ENCODE measurements at regions of chr5 and their contacts with region 1.

Region 1: GRCh38 chr5:154829589-154830218 is 20.7 kb downstream of the FAXDC2 start:
- DNase-seq: peak; percentile 98
- H3K4me3 Mint-ChIP-seq: peak overlapping the region; percentile 14
- H3K27ac Mint-ChIP-seq: peak overlapping the region; percentile 87
- H3K4me1 Mint-ChIP-seq: peaks cover 54% of the 10 kb centered on the region
- H3K27me3 Mint-ChIP-seq: no peaks in the 10 kb centered on the region
- CTCF ChIP-seq: no peak

Region 2: DNA sequence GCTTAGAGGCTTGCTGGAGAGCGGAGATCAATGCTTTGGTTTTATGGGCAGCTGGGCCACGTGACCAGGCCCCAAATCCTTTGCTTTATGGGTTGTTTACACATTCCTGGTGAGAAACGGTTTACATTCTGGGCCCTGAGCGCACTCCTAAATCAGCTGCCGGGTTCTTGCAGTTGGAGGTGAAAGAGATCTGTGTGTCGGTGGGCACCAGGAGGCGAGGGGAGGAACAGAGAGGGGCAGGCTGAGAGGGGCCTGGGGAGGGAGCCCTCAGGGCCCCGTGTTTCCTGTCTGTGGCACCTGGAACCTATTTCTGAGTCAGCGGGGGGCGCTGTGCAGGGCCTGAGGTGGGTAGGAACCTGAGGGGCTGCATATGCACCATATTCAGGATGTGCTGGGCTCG is 288.2 kb before region 1 on chr5:
- CTCF ChIA-PET with region 1: no interaction called
- POLR2A ChIA-PET with region 1: no interaction called
- intact Hi-C with region 1: no loop called
- DNase-seq: no peak
- H3K4me3 Mint-ChIP-seq: no peak overlapping the region
- H3K27ac Mint-ChIP-seq: no peak overlapping the region
- H3K4me1 Mint-ChIP-seq: peaks cover 15% of the 10 kb centered on the region
- H3K27me3 Mint-ChIP-seq: peaks cover 73% of the 10 kb centered on the region
- CTCF ChIP-seq: no peak

Region 3: GRCh38 chr5:154557548-154557947 is 272.2 kb before region 1 on chr5:
- CTCF ChIA-PET with region 1: no interaction called
- POLR2A ChIA-PET with region 1: no interaction called
- intact Hi-C with region 1: no loop called
- DNase-seq: no peak
- H3K4me3 Mint-ChIP-seq: no peak overlapping the region
- H3K27ac Mint-ChIP-seq: no peak overlapping the region
- H3K4me1 Mint-ChIP-seq: no peaks in the 10 kb centered on the region
- H3K27me3 Mint-ChIP-seq: peaks cover 13% of the 10 kb centered on the region
- CTCF ChIP-seq: no peak

Region 4: DNA sequence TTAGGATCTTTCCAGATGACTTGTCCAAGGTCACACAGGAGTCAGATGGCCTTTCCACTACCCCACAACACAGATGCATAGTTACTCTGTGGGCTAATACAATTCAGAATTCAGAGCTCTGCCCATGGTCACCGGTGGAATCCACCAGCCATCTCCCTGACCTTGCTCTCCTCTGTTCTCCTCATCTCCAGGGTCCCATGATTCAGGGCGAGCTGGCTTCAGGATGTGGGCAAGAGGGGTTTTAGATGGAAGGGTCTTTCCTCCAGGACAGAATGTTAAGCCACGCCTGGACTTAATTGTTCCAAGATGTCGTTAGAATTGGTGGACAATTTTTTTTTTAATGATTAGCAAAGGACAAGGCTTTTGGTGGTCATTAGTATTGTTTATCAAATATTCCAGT is 156.2 kb before region 1 on chr5:
- CTCF ChIA-PET with region 1: no interaction called
- POLR2A ChIA-PET with region 1: no interaction called
- intact Hi-C with region 1: no loop called
- DNase-seq: no peak
- H3K4me3 Mint-ChIP-seq: no peak overlapping the region
- H3K27ac Mint-ChIP-seq: no peak overlapping the region
- H3K4me1 Mint-ChIP-seq: no peaks in the 10 kb centered on the region
- H3K27me3 Mint-ChIP-seq: no peaks in the 10 kb centered on the region
- CTCF ChIP-seq: no peak

Region 5: GRCh38 chr5:154818471-154819116 is 11.1 kb before region 1 on chr5:
- CTCF ChIA-PET with region 1: interaction called, 5 read pairs
- POLR2A ChIA-PET with region 1: interaction called, 13 read pairs
- intact Hi-C with region 1: no loop called
- DNase-seq: no peak
- H3K4me3 Mint-ChIP-seq: no peak overlapping the region
- H3K27ac Mint-ChIP-seq: peak overlapping the region; percentile 34
- H3K4me1 Mint-ChIP-seq: peaks cover 11% of the 10 kb centered on the region
- H3K27me3 Mint-ChIP-seq: no peaks in the 10 kb centered on the region
- CTCF ChIP-seq: no peak

Region 6: GRCh38 chr5:154850255-154851062 is 20.8 kb after region 1 on chr5 and contains the start of gene FAXDC2:
- CTCF ChIA-PET with region 1: interaction called, 3 read pairs
- POLR2A ChIA-PET with region 1: interaction called, 37 read pairs
- intact Hi-C with region 1: no loop called
- DNase-seq: peak; percentile 77
- H3K4me3 Mint-ChIP-seq: peak within 1 kb of the TSS; percentile 80
- H3K27ac Mint-ChIP-seq: peak within 1 kb of the TSS; percentile 80
- H3K4me1 Mint-ChIP-seq: peaks cover 13% of the 10 kb centered on the region
- H3K27me3 Mint-ChIP-seq: no peaks in the 10 kb centered on the region
- CTCF ChIP-seq: no peak
- total RNA-seq, gene FAXDC2: 0.79 and 2.1 TPM in 2 replicates

Region 7: DNA sequence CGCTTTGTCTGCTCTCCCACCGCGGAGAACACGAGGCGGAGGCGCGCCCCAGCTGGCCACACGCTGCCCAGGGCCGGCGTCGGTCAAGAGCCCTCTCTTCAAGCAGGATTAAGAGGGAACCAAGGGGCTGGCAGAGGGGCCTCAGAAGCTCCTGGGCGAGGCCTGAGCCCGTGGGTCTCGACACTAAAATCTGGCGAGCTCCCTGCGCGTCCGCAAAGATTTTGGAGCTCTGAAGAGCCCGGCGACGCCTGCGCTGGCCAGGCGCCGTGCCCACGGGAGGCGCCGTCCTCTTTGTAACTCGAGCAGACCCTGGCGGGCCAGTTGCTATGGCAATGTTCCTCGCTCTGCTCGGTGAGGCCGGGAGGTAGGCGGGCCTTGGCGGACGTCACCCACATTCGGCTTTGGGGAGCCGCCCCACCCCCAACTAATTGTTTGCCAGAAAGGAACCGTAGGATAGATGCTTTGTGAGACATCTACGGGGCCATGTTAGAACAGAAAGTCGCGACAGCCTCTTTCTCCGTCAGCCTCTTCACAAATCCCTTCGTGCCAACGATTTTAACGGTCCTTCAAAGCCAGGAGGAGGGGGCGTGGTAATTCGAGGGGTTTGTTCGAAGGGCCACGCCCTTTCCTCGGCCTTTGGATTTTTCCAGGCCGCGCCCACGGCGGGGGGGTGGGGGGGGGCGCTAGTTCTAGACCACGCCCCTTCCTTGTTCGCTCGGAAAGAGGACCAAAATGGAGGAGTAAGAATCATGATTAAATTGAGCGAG is 28.0 kb after region 1 on chr5:
- CTCF ChIA-PET with region 1: interaction called, 5 read pairs
- POLR2A ChIA-PET with region 1: interaction called, 78 read pairs
- intact Hi-C with region 1: loop called (anchors 2 kb)
- DNase-seq: peak; percentile 99
- H3K4me3 Mint-ChIP-seq: peak overlapping the region; percentile 85
- H3K27ac Mint-ChIP-seq: peak overlapping the region; percentile 95
- H3K4me1 Mint-ChIP-seq: peaks cover 36% of the 10 kb centered on the region
- H3K27me3 Mint-ChIP-seq: no peaks in the 10 kb centered on the region
- CTCF ChIP-seq: no peak